Kidney (tissue), 22 donors: ENCODE measurements at regions of chr17 and their contacts with region 1.

Region 1: DNA sequence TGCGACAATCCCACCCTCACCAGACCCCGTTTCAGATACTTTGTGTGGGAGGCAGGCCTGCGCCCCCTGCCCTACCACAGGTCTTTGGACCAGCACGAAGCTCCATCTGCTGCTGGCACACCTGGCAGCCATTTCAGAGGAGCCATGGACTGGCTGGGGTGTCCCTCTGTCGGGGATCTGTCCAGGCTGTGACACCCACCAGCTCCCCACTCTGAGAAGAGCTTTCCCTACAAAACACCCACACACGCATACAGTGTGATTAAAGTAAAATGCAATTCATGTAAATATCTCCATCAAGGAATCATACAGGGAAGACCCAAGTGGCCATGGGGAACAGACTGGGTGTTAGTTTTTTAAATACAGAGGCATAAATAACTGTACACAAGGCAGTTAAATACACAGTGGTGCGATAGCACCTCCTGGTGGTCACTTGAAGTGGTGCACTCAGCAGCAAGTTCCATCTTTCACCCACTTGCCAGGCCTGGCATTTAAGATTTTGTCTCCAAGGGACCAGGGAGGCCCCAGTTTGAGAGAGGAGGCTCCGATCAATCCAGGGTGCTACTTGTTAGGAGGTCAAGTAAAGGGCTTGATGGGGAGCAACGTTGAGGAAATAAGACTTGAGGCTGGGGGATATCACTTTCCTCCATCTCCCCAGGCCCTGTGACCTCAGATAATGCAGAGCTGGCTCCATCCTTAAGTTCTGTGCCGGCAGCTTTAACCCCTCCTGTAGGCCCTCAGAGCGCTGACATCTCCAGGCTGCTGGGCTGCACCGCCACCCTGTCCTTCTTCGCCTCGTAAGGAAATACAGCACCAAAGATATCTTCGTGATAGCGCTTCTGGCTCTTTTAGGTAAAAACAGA is 43.6 kb downstream of the NOS2 start:
- DNase-seq: peak; percentile 25 to 70 (median 57)
- H3K4me3 ChIP-seq: no peak overlapping the region
- H3K27ac ChIP-seq: no peak overlapping the region
- H3K4me1 ChIP-seq: no peaks in the 10 kb centered on the region
- H3K27me3 ChIP-seq: no peaks in the 10 kb centered on the region
- CTCF ChIP-seq: peak; percentile 74

Region 2: GRCh38 chr17:27654654-27655524 is 101.9 kb before region 1 on chr17:
- intact Hi-C with region 1: loop called (anchors 5 kb)
- DNase-seq: peak; percentile 77 to 88 (median 83)
- H3K4me3 ChIP-seq: no peak overlapping the region
- H3K27ac ChIP-seq: no peak overlapping the region
- H3K4me1 ChIP-seq: no peaks in the 10 kb centered on the region
- H3K27me3 ChIP-seq: no peaks in the 10 kb centered on the region
- CTCF ChIP-seq: peak; percentile 81

Region 3: DNA sequence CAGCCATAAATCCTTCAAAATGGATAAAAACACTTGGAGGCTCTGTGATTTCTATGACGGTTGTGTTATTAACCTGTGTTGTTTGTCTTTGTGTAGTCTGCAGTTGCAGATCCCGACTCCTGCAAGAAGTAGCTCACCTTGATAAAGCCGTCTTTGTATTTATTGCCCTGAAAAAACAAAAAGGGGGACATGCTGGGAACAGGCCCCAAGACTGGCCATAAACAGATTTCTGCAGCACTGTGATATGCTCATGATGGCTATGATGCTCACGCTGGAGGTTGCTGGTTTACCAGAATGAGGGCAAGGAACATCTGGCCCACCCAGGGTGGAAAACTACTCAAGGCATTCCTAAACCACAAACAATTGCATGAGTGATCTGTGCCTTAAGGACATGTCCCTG is 54.8 kb before region 1 on chr17:
- intact Hi-C with region 1: no loop called
- DNase-seq: no peak
- H3K4me3 ChIP-seq: no peak overlapping the region
- H3K27ac ChIP-seq: no peak overlapping the region
- H3K4me1 ChIP-seq: no peaks in the 10 kb centered on the region
- H3K27me3 ChIP-seq: no peaks in the 10 kb centered on the region
- CTCF ChIP-seq: no peak